Thyroid gland (tissue), 4 donors: ENCODE measurements at regions of chr2 and their contacts with region 1.

Region 1: GRCh38 chr2:99180755-99181623 is at the starts of genes MITD1 and MRPL30:
- DNase-seq: peak; percentile 92
- H3K4me3 ChIP-seq: peak within 1 kb of the TSS; percentile 68 to 80 (median 80)
- H3K27ac ChIP-seq: peak within 1 kb of the TSS in 2 of 3 donors; percentile 57 to 64
- H3K4me1 ChIP-seq: peaks cover 14 to 30% of the 10 kb centered on the region in 2 donors
- H3K27me3 ChIP-seq: no peaks in the 10 kb centered on the region
- CTCF ChIP-seq: peak in 1 of 6 experiments; percentile 14
- POLR2A ChIP-seq: peak; percentile 27 to 79
- total RNA-seq, gene MITD1: 20.8 to 39.6 (median 25.9) TPM
- total RNA-seq, gene MRPL30: 27.2 to 47.9 (median 37.0) TPM

Region 2: DNA sequence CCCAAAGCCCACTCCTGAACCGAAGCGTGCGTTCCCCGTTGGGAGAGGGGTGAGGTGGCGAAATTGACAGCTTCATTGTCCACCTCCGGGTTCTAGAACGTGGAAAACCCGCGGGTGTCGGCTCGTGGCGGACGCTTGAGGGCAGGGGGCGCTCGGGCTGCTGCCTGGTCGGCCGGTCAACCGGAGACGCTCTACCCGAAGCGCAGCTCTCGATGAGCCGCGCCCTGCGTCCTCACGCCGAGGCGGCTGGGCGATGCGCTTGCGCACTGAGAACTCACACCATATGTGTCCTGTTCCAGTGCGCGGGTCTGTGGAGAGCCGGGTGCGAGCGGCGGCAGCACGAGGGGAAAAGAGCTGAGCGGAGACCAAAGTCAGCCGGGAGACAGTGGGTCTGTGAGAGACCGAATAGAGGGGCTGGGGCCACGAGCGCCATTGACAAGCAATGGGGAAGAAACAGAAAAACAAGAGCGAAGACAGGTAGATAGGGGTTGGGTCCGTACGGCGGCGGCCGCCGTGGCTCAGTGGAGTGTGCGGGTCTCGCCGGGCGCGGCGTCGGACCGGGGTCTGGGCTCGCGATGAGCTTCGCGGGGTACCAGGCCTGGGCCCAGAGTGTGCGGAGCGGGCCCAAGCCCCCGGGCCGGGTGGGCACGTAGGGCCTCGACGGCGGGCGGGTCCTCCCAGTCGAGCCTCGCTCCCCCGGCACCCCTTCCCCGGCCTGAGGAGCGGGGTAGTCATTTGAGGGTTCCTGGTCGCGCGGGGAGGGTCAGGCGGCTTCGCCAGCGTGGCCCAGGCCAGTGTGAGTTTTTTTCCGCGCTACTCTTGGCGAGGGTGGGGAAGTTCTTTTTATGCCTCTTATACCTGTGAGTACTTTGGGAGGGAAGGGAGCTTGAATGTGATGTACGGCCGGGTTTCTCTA is 156.4 kb after region 1 on chr2 and contains the start of gene EIF5B:
- intact Hi-C with region 1: loop called (anchors 10 kb)
- DNase-seq: peak; percentile 96 to 97
- H3K4me3 ChIP-seq: peak within 1 kb of the TSS; percentile 79 to 93 (median 89)
- H3K27ac ChIP-seq: peak within 1 kb of the TSS; percentile 76 to 96 (median 95)
- H3K4me1 ChIP-seq: peaks cover 19 to 22% of the 10 kb centered on the region in 2 donors
- H3K27me3 ChIP-seq: no peaks in the 10 kb centered on the region
- CTCF ChIP-seq: peak; percentile 12 to 71 (median 39)
- POLR2A ChIP-seq: peak in 1 of 2 donors; percentile 78
- total RNA-seq, gene EIF5B: 24.8 to 36.9 (median 29.8) TPM